Esophagus muscularis mucosa (tissue), 4 donors: ENCODE measurements at regions of chr18 and their contacts with region 1.

Region 1: GRCh38 chr18:77207540-77207939 is 42.1 kb upstream of the GALR1 start:
- DNase-seq: no peak
- H3K4me3 ChIP-seq: peak overlapping the region in 1 of 4 donors; percentile 3
- H3K27ac ChIP-seq: peak overlapping the region; percentile 71 to 75 (median 74)
- H3K4me1 ChIP-seq: peaks cover 18 to 55% (median 42%) of the 10 kb centered on the region in 4 donors
- H3K27me3 ChIP-seq: no peaks in the 10 kb centered on the region
- CTCF ChIP-seq: peak; percentile 56 to 73 (median 57)
- EP300 ChIP-seq: no peak
- POLR2A ChIP-seq: no peak

Region 2: GRCh38 chr18:76803814-76804213 is 403.7 kb before region 1 on chr18:
- intact Hi-C with region 1: loop called (anchors 5 kb)
- DNase-seq: peak; percentile 94
- H3K4me3 ChIP-seq: no peak overlapping the region
- H3K27ac ChIP-seq: no peak overlapping the region
- H3K4me1 ChIP-seq: peaks cover 14 to 20% (median 19%) of the 10 kb centered on the region in 4 donors
- H3K27me3 ChIP-seq: peaks cover 0 to 6% (median 3%) of the 10 kb centered on the region in 4 donors
- CTCF ChIP-seq: peak; percentile 59 to 84 (median 73)
- EP300 ChIP-seq: no peak
- POLR2A ChIP-seq: no peak

Region 3: GRCh38 chr18:77000527-77000926 is 207.0 kb before region 1 on chr18:
- intact Hi-C with region 1: loop called (anchors 2 kb)
- DNase-seq: no peak
- H3K4me3 ChIP-seq: peak overlapping the region in 3 of 4 donors; percentile 9 to 38 (median 29)
- H3K27ac ChIP-seq: no peak overlapping the region
- H3K4me1 ChIP-seq: peaks cover 0 to 8% (median 6%) of the 10 kb centered on the region in 4 donors
- H3K27me3 ChIP-seq: no peaks in the 10 kb centered on the region
- CTCF ChIP-seq: peak; percentile 94 to 97 (median 95)
- EP300 ChIP-seq: no peak
- POLR2A ChIP-seq: no peak

Region 4: GRCh38 chr18:77067291-77068061 is 140.1 kb before region 1 on chr18:
- intact Hi-C with region 1: loop called (anchors 2 kb)
- DNase-seq: no peak
- H3K4me3 ChIP-seq: peak overlapping the region in 1 of 4 donors; percentile 13
- H3K27ac ChIP-seq: peak overlapping the region; percentile 63 to 80 (median 69)
- H3K4me1 ChIP-seq: peaks cover 45 to 63% (median 57%) of the 10 kb centered on the region in 4 donors
- H3K27me3 ChIP-seq: no peaks in the 10 kb centered on the region
- CTCF ChIP-seq: no peak
- EP300 ChIP-seq: no peak
- POLR2A ChIP-seq: no peak

Region 5: DNA sequence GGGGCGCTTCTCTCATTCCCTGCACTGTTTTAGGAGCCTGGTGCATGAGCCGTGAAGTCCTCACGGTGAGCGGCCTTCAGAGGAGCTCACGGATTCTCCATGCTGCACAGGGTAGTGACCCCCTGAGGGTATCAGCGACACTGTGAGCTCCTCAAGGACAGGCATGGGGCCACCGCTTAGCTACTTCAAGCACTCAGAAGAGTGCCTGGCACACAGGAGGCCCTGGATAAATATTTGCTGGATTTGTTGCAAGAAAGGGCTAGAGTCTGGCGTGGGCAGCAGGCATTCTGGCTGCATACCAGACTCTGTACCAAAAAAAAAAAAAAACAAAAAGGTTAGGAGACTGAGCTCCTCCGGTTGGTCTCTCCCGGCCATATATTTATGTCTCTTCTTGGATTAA is 69.3 kb before region 1 on chr18:
- intact Hi-C with region 1: loop called (anchors 5 kb)
- DNase-seq: no peak
- H3K4me3 ChIP-seq: no peak overlapping the region
- H3K27ac ChIP-seq: peak overlapping the region; percentile 39 to 48 (median 44)
- H3K4me1 ChIP-seq: peaks cover 6 to 41% (median 30%) of the 10 kb centered on the region in 4 donors
- H3K27me3 ChIP-seq: peaks cover 0 to under 1% (median 0%) of the 10 kb centered on the region in 4 donors
- CTCF ChIP-seq: no peak
- EP300 ChIP-seq: no peak
- POLR2A ChIP-seq: no peak

Region 6: DNA sequence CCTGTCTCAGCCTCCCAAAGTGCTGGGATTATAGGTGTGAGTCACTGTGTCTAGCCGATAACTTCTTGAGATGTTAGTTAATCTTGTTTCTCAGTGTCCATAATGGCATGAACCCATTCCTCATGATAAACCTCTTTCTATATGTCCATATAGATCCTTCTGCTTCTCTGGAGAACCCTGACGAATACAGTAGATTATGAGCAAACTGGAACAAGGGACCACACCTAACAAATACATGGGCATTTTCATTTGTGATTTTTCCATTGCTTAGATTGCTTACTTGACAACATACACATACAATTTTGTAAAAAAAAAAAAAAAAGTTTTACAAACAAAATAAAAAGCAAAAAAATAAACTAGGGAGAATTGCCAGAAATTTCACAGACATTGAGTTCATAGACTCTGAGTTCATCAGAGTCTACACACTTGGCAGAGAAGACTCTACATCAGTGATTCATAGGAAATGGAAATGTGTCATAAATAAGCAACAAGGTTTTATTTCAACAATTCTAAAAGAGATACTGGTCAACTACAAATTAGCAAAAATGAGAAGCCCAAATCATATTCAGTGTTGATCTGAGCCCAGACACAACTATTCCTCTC is 138.8 kb after region 1 on chr18:
- intact Hi-C with region 1: no loop called
- DNase-seq: no peak
- H3K4me3 ChIP-seq: no peak overlapping the region
- H3K27ac ChIP-seq: no peak overlapping the region
- H3K4me1 ChIP-seq: no peaks in the 10 kb centered on the region
- H3K27me3 ChIP-seq: peaks cover 0 to 8% (median 0%) of the 10 kb centered on the region in 4 donors
- CTCF ChIP-seq: no peak
- EP300 ChIP-seq: no peak
- POLR2A ChIP-seq: no peak